ENCODE measurements at regions of chr10 and their contacts with region 1.

Region 1: GRCh38 chr10:11986593-11987216 is 55.9 kb downstream of the UPF2 start:
- DNase-seq: peak; percentile 29 to 83 (median 59)
- ATAC-seq: peak in 3 of 4 experiments; percentile 45 to 51 (median 50)
- H3K4me3 ChIP-seq: no peak overlapping the region
- H3K4me3 Mint-ChIP-seq: no peak overlapping the region
- H3K27ac ChIP-seq: no peak overlapping the region
- H3K27ac Mint-ChIP-seq: no peak overlapping the region
- H3K4me1 ChIP-seq: no peaks in the 10 kb centered on the region
- H3K4me1 Mint-ChIP-seq: peaks cover 7 to 9% (median 8%) of the 10 kb centered on the region in 3 donors
- H3K27me3 ChIP-seq: no peaks in the 10 kb centered on the region
- H3K27me3 Mint-ChIP-seq: no peaks in the 10 kb centered on the region

Region 2: DNA sequence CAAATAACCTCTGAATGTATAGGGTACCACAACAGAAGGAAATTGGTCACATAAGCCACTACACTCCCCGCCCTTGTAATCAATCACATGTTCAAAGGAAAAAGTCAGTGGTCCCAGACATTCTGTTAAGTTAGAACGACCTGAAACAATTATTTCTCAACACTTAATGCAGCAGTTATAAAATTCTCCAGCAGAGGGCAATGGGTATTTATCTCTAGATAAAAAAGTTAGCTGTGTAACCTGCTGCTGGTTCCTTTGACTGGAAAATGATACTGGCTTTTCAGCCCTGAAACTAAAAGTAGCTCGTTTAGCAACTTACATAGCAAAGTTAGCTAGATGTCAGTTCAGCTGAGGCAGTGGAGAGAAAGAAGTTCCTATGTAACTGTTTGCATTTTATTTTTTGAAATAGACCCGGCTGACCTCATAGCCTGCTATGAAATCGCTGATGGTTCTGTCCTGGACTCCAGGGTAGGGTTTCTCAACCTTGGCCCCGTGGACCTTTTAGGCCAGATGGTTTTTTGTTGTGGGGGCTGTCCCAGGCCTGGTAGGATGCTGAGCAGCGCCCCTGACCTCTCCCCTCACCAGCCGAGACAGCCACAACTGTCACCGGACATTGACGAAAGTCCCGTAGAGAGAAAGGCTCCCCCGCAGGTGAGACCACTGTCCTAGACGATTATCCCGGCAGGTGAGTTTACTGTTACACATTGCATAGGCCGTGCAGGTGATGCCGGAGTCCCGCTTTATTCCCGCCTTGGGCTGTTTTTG is 203.7 kb before region 1 on chr10:
- CTCF ChIA-PET with region 1: interaction called, 9 to 18 read pairs
- POLR2A ChIA-PET with region 1: no interaction called
- DNase-seq: peak in 2 of 35 experiments; percentile 9 to 66
- ATAC-seq: peak in 2 of 4 experiments; percentile 36 to 45
- H3K4me3 ChIP-seq: no peak overlapping the region
- H3K4me3 Mint-ChIP-seq: no peak overlapping the region
- H3K27ac ChIP-seq: no peak overlapping the region
- H3K27ac Mint-ChIP-seq: no peak overlapping the region
- H3K4me1 ChIP-seq: no peaks in the 10 kb centered on the region
- H3K4me1 Mint-ChIP-seq: no peaks in the 10 kb centered on the region
- H3K27me3 ChIP-seq: peaks cover 0 to 10% of the 10 kb centered on the region in 2 experiments
- H3K27me3 Mint-ChIP-seq: peaks cover 4 to 8% of the 10 kb centered on the region in 2 donors

Region 3: GRCh38 chr10:12135631-12136030 is 148.9 kb after region 1 on chr10:
- CTCF ChIA-PET with region 1: no interaction called
- POLR2A ChIA-PET with region 1: no interaction called
- DNase-seq: no peak
- ATAC-seq: no peak
- H3K4me3 ChIP-seq: no peak overlapping the region
- H3K4me3 Mint-ChIP-seq: no peak overlapping the region
- H3K27ac ChIP-seq: no peak overlapping the region
- H3K27ac Mint-ChIP-seq: no peak overlapping the region
- H3K4me1 ChIP-seq: peaks cover 0 to 3% of the 10 kb centered on the region in 2 experiments
- H3K4me1 Mint-ChIP-seq: peaks cover 4 to 9% (median 8%) of the 10 kb centered on the region in 3 donors
- H3K27me3 ChIP-seq: no peaks in the 10 kb centered on the region
- H3K27me3 Mint-ChIP-seq: no peaks in the 10 kb centered on the region